Panc1 (cell line): ENCODE measurements at regions of chrX and their contacts with region 1.

Region 1: GRCh38 chrX:108699368-108699767 is 37.0 kb downstream of the IRS4 start:
- DNase-seq: peak; percentile 8
- ATAC-seq: peak; percentile 83; the same call in 1 of the 2 replicates
- H3K4me3 ChIP-seq: no peak overlapping the region
- H3K27ac ChIP-seq: no peak overlapping the region
- H3K4me1 ChIP-seq: no peaks in the 10 kb centered on the region
- H3K27me3 ChIP-seq: peaks cover 2% of the 10 kb centered on the region; the same call in 1 of the 2 replicates
- CTCF ChIP-seq: peak; percentile 52; the same call in 1 of the 2 replicates

Region 2: DNA sequence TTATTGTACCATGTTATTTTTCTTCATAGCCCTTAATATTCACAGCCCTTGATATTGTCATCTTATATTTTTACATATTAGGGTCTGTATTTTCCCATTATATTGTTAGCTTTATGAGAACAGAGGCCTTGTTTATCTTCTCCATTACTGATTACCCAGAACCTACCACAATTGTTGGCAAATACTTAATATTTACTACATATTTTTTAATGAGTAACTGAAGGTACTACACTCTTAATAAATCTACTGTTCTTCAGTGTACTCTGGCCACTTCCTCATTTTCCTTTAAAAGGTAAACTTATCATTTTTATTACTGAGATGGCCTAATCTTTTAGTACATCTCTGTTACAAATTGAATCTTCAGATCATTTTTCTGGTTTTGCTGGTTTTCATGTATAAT is 126.2 kb before region 1 on chrX:
- CTCF ChIA-PET with region 1: no interaction called
- POLR2A ChIA-PET with region 1: no interaction called
- in situ Hi-C with region 1: no loop called
- intact Hi-C with region 1: no loop called
- DNase-seq: no peak
- ATAC-seq: no peak
- H3K4me3 ChIP-seq: no peak overlapping the region
- H3K27ac ChIP-seq: no peak overlapping the region
- H3K4me1 ChIP-seq: no peaks in the 10 kb centered on the region
- H3K27me3 ChIP-seq: no peaks in the 10 kb centered on the region
- CTCF ChIP-seq: no peak

Region 3: GRCh38 chrX:108671524-108671923 is 27.8 kb before region 1 on chrX:
- CTCF ChIA-PET with region 1: no interaction called
- POLR2A ChIA-PET with region 1: no interaction called
- in situ Hi-C with region 1: no loop called
- intact Hi-C with region 1: no loop called
- DNase-seq: no peak
- ATAC-seq: no peak
- H3K4me3 ChIP-seq: no peak overlapping the region
- H3K27ac ChIP-seq: no peak overlapping the region
- H3K4me1 ChIP-seq: no peaks in the 10 kb centered on the region
- H3K27me3 ChIP-seq: no peaks in the 10 kb centered on the region
- CTCF ChIP-seq: no peak

Region 4: GRCh38 chrX:108736509-108737479 is 37.4 kb after region 1 on chrX and contains the start of gene IRS4:
- CTCF ChIA-PET with region 1: interaction called, 3 read pairs
- POLR2A ChIA-PET with region 1: interaction called, 11 read pairs
- in situ Hi-C with region 1: no loop called
- intact Hi-C with region 1: no loop called
- DNase-seq: no peak
- ATAC-seq: peak; percentile 75
- H3K4me3 ChIP-seq: peak within 1 kb of the TSS; percentile 31 to 56
- H3K27ac ChIP-seq: no peak within 1 kb of the TSS
- H3K4me1 ChIP-seq: peaks cover 3% of the 10 kb centered on the region; the same call in 1 of the 2 replicates
- H3K27me3 ChIP-seq: peaks cover 28% of the 10 kb centered on the region
- CTCF ChIP-seq: 0 out of 2 replicates have a peak, but pooled peaks have one; percentile 7
- total RNA-seq, gene IRS4: not detected

Region 5: GRCh38 chrX:109384699-109385098 is 685.3 kb after region 1 on chrX:
- CTCF ChIA-PET with region 1: interaction called, 5 read pairs
- POLR2A ChIA-PET with region 1: no interaction called
- in situ Hi-C with region 1: no loop called
- intact Hi-C with region 1: loop called (anchors 10 kb)
- DNase-seq: no peak
- ATAC-seq: no peak
- H3K4me3 ChIP-seq: no peak overlapping the region
- H3K27ac ChIP-seq: no peak overlapping the region
- H3K4me1 ChIP-seq: no peaks in the 10 kb centered on the region
- H3K27me3 ChIP-seq: no peaks in the 10 kb centered on the region
- CTCF ChIP-seq: peak; percentile 34; the same call in 1 of the 2 replicates

Region 6: GRCh38 chrX:109475174-109475891 is 776.0 kb after region 1 on chrX:
- CTCF ChIA-PET with region 1: interaction called, 4 read pairs
- POLR2A ChIA-PET with region 1: no interaction called
- in situ Hi-C with region 1: no loop called
- intact Hi-C with region 1: loop called (anchors 2 kb)
- DNase-seq: peak; percentile 7
- ATAC-seq: peak; percentile 93
- H3K4me3 ChIP-seq: no peak overlapping the region
- H3K27ac ChIP-seq: no peak overlapping the region
- H3K4me1 ChIP-seq: peaks cover 4% of the 10 kb centered on the region; the same call in 1 of the 2 replicates
- H3K27me3 ChIP-seq: peaks cover 10% of the 10 kb centered on the region
- CTCF ChIP-seq: peak; percentile 73